Activated B cell treated with CpG ODN at 0.5 μM for 24 hours (primary cell): ENCODE measurements at regions of chr2 and their contacts with region 1.

Region 1: DNA sequence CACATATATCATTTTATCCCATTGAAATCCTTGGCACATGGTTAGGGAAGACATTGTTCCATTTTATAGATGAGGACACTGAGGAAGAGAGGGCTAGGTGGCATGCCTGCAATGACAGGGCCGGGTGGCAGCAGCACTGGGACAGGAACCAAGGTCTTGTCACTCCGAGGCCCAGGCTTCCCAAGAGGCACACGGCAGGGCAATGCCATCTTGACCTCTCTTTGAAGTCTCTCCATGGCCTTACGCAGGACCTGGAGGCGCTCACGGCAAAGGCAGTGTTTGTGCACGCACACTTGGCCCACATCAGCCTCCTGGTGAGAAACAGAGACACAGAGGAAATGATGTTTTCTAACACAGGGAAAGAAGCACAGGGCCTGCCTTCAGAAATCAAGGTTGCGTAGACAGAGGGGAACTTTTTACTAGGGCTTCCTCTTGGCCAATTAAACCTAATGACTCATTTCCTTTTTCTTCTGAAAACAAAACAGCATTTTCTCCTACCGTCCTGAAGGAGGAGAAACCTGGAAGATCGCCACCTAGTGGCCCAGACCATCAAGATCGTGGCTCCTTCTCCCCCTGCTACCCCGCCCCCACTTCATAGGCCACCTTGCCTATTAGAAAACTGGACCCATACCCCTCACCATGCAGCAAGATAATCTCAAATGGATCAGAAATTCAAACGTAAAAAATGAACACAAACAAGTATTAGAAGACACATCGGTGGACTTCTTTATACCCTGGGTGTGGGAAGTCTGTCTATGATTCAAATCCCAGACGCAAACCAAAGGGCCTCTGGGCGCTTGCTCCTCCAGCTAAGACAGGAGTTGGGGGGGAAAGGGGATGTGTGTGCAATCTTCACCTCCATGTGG is 74.6 kb upstream of the SP3 start:
- DNase-seq: peak; percentile 69
- ATAC-seq: peak; percentile 93
- H3K4me3 Mint-ChIP-seq: peak overlapping the region; percentile 50
- H3K27ac Mint-ChIP-seq: peak overlapping the region; percentile 92
- H3K4me1 Mint-ChIP-seq: peaks cover 28% of the 10 kb centered on the region
- H3K27me3 Mint-ChIP-seq: no peaks in the 10 kb centered on the region
- CTCF ChIP-seq: no peak

Region 2: DNA sequence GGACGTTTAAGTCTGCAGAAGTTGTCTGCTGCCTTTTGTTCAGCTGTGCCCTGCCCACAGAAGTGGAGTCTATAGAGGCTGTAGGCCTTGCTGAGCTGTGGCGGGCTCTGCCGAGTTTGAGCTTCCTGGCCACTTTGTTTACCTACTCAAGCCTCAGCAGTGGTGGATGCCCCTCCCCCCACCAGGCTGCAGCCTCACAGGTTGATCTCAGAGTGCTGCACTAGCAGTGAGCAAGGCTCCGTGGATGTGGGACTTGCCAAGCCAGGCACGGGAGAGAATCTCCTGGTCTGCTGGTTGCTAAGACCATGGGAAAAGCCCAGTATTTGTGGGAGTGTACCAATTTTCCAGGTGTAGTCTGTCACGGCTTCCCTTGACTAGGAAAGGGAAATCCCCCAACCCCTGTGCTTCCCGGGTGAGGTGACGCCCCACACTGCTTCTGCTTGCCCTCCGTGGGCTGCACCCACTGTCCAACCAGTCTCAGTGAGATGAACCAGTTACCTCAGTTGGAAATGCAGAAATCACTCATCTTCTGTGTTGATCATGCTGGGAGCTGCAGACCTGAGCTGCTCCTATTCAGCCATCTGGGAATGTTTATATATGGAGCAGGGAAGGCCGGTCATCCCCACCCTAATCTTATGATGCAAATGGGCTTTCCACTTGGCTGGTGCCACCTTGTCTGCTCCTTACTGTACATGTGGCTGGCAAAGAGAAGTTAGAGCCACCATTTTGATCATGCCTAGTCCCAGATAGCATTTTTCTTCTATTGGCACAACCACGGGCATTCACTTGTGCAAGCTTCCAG is 1769.3 kb before region 1 on chr2:
- CTCF ChIA-PET with region 1: no interaction called
- POLR2A ChIA-PET with region 1: no interaction called
- intact Hi-C with region 1: no loop called
- DNase-seq: no peak
- ATAC-seq: no peak
- H3K4me3 Mint-ChIP-seq: no peak overlapping the region
- H3K27ac Mint-ChIP-seq: no peak overlapping the region
- H3K4me1 Mint-ChIP-seq: no peaks in the 10 kb centered on the region
- H3K27me3 Mint-ChIP-seq: peaks cover 16% of the 10 kb centered on the region
- CTCF ChIP-seq: no peak

Region 3: GRCh38 chr2:173680580-173680979 is 359.2 kb before region 1 on chr2:
- CTCF ChIA-PET with region 1: no interaction called
- POLR2A ChIA-PET with region 1: no interaction called
- intact Hi-C with region 1: no loop called
- DNase-seq: no peak
- ATAC-seq: no peak
- H3K4me3 Mint-ChIP-seq: no peak overlapping the region
- H3K27ac Mint-ChIP-seq: no peak overlapping the region
- H3K4me1 Mint-ChIP-seq: no peaks in the 10 kb centered on the region
- H3K27me3 Mint-ChIP-seq: peaks cover 19% of the 10 kb centered on the region
- CTCF ChIP-seq: no peak

Region 4: DNA sequence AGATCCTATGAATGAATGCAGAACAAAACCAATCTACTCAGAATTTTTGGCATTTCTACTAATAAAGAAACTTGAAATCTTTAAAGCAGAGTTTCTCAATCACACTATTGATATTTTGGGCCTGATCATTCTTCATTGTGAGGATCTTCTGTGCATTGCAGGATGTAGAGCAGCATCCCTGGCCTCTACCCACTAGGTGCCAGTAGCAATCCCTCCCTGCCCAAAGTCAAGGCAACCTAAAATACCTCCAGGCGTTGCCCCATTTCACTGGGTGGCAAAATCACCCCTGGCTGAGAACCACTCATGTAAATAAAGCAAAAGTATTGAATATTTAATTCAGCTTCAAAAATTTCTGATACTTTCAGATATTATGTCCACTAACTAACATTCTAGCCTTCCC is 287.6 kb before region 1 on chr2:
- CTCF ChIA-PET with region 1: interaction called, 3 read pairs
- POLR2A ChIA-PET with region 1: no interaction called
- intact Hi-C with region 1: loop called (anchors 5 kb)
- DNase-seq: no peak
- ATAC-seq: no peak
- H3K4me3 Mint-ChIP-seq: no peak overlapping the region
- H3K27ac Mint-ChIP-seq: no peak overlapping the region
- H3K4me1 Mint-ChIP-seq: no peaks in the 10 kb centered on the region
- H3K27me3 Mint-ChIP-seq: peaks cover 5% of the 10 kb centered on the region
- CTCF ChIP-seq: no peak

Region 5: DNA sequence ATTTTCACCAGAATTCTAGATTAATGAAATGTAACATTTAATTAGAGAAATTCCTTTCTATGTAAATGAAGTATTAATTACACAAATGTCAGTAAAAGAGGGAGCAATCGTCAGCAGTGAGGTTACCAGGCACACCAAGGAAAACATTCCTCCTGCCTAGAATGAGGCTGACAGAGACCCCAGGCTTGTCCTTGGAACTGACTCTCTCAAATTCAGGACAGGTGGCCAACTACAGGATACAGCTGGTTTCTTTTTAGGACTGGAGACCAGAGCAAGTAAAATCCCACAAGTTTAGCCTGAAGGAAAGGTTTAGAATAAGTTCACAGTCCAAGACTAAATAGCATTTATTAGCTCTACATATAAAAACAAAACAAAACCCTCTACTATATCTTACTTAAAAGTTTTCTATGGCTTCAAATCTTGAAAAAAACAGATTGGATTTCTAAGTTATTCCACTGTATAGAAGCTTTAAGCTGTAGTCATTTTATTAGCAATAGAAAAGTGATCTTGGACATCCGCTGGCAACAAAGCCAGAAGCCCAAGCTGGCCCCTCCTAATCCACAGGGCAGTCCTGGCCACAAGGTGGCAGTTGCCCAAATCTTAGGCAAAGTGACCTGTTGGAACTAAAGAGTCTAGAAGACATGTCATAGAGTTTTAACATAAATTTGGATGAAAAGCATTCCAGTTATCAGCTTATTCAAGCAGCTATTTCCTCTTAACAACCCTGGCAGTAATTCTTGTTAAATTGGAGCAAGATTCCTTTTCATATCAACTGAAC is 155.6 kb before region 1 on chr2:
- CTCF ChIA-PET with region 1: interaction called, 4 read pairs
- POLR2A ChIA-PET with region 1: no interaction called
- intact Hi-C with region 1: loop called (anchors 2 kb)
- DNase-seq: no peak
- ATAC-seq: peak; percentile 50
- H3K4me3 Mint-ChIP-seq: no peak overlapping the region
- H3K27ac Mint-ChIP-seq: no peak overlapping the region
- H3K4me1 Mint-ChIP-seq: peaks cover 2% of the 10 kb centered on the region
- H3K27me3 Mint-ChIP-seq: peaks cover 11% of the 10 kb centered on the region
- CTCF ChIP-seq: no peak

Region 6: DNA sequence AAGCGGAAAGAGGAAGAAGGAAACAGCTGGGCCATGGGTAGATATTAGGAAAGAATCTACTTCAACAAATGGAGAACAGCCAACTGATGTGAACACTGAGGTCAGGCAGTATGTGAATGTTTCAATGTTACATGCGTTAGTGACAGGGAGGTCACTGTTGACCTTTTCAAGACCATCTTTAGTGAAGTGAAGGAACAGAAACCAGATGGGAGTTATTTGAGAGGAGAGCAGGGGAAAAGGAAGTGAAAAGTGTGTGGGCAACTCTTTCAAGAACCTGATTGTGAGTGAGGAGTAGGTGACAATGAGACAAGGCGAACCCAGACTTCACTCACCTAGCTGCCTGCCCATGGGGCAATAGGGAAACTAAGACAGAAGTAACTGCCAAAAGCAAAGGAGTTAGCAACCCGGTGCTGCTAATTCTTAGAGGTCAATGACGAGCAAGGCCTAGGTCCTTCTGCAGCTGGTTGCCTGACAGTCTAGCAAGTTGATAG is 141.6 kb before region 1 on chr2:
- CTCF ChIA-PET with region 1: interaction called, 3 read pairs
- POLR2A ChIA-PET with region 1: no interaction called
- intact Hi-C with region 1: loop called (anchors 2 kb)
- DNase-seq: no peak
- ATAC-seq: peak; percentile 90
- H3K4me3 Mint-ChIP-seq: peak overlapping the region; percentile 52
- H3K27ac Mint-ChIP-seq: peak overlapping the region; percentile 51
- H3K4me1 Mint-ChIP-seq: peaks cover 41% of the 10 kb centered on the region
- H3K27me3 Mint-ChIP-seq: no peaks in the 10 kb centered on the region
- CTCF ChIP-seq: no peak

Region 7: DNA sequence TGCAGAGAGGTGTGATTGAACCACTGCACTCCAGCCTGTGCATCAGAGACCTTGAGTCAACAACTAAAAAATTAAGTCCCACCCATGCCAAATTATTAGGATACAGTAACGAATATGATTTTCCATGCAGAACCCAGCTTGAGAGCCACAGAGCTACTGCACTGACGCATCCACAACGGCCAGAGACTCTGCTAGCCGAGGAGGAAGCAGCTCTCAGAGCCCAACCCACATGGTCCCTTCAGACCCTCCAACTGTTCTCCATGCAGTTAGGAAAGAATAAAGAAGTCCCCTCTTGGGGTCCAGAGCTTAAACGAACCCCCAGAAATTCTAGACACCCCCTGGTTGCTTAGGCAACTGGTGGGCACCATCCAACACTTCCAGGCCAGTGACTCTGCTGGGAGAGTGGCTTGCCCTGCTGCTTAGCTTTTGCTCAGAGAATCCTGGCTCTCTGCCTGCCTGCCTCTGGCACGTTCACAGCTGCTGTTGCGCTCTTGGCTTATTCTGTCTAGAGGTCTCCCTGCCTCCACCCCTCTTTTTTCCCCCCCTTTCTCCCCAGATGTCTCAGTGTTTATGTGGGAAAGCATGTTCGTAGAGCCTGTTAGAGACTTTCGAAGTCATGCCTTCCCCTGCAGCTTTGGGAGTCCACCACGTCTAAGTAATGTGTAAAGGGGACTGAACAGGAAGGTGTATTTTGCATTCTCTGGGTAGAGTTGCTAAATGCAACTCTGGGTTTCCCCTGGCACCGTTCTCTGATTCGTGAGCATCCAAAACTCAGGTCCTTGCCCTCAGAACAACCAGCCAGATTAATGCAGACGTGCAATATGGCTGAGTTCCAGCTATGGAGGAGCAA is 48.6 kb before region 1 on chr2:
- CTCF ChIA-PET with region 1: interaction called, 3 read pairs
- POLR2A ChIA-PET with region 1: interaction called, 9 read pairs
- intact Hi-C with region 1: loop called (anchors 1 kb)
- DNase-seq: peak; percentile 22
- ATAC-seq: peak; percentile 96
- H3K4me3 Mint-ChIP-seq: peak overlapping the region; percentile 68
- H3K27ac Mint-ChIP-seq: peak overlapping the region; percentile 89
- H3K4me1 Mint-ChIP-seq: peaks cover 40% of the 10 kb centered on the region
- H3K27me3 Mint-ChIP-seq: no peaks in the 10 kb centered on the region
- CTCF ChIP-seq: no peak

Region 8: DNA sequence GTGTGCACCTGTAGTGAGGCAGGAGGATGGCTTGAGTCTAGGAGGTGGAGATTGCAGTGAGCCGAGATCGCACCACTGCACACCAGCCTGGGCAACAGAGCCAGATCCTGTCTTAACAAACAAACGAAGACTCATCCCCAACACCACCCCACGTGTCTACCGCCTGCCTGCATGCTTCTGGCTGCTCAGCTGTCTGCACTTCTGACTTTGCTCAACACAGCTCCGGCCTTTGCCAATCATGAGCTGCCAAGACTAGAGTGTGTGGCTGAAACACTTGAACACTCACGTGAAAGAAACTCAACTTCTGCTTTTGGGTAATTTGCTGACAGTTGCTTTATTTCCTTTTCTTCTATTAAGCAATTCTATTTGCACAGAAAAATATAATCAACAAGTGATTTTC is 42.5 kb before region 1 on chr2:
- CTCF ChIA-PET with region 1: no interaction called
- POLR2A ChIA-PET with region 1: interaction called, 8 read pairs
- intact Hi-C with region 1: loop called (anchors 1 kb)
- DNase-seq: peak; percentile 45
- ATAC-seq: peak; percentile 100
- H3K4me3 Mint-ChIP-seq: peak overlapping the region; percentile 13
- H3K27ac Mint-ChIP-seq: peak overlapping the region; percentile 72
- H3K4me1 Mint-ChIP-seq: peaks cover 33% of the 10 kb centered on the region
- H3K27me3 Mint-ChIP-seq: no peaks in the 10 kb centered on the region
- CTCF ChIP-seq: no peak